Ascending aorta (tissue), 2 donors: ENCODE measurements at regions of chr20 and their contacts with region 1.

Region 1: DNA sequence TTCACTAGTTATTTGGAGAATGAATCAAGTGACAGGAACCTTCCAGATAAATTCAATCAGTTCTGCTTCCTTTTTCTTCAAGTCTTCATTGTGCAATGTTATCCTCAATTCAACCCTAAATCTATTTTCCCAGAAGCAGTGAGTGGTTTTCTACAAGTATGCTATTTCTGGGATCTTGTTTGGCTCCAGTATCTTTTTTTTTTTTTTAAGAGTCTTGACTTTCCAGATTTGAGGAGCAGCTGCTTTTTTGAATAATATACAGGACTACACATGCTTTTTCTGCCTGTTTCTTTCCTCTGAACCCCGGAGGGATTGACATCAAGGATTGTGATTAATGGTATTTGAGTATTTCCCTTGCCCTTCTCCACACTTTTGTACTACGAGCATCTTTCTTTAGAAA is 339.2 kb upstream of the JAG1 start:
- DNase-seq: no peak
- H3K4me3 ChIP-seq: no peak overlapping the region
- H3K27ac ChIP-seq: peak overlapping the region in 1 of 2 donors; percentile 37
- H3K4me1 ChIP-seq: peaks cover 0 to 7% of the 10 kb centered on the region in 2 donors
- H3K27me3 ChIP-seq: no peaks in the 10 kb centered on the region
- CTCF ChIP-seq: no peak

Region 2: DNA sequence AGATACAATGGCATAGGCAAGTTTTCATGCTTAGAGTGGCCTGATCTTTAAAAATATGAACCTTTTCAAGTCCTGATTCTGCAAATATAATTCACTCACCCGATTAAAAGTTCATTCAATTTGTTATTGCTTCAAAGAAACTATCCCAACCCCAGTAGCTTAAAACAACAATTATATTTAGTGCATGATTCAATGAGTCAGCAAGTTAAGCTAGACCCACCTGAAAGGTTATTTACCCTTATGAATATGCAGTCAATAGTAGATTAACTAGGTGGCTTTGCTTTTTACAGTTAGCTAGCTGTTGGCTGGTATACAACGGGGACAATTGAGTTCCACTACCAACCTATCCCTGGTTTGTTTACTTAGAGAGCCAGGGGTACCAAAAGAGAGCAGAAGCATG is 1073.7 kb before region 1 on chr20:
- intact Hi-C with region 1: no loop called
- DNase-seq: no peak
- H3K4me3 ChIP-seq: no peak overlapping the region
- H3K27ac ChIP-seq: no peak overlapping the region
- H3K4me1 ChIP-seq: no peaks in the 10 kb centered on the region
- H3K27me3 ChIP-seq: no peaks in the 10 kb centered on the region
- CTCF ChIP-seq: no peak

Region 3: DNA sequence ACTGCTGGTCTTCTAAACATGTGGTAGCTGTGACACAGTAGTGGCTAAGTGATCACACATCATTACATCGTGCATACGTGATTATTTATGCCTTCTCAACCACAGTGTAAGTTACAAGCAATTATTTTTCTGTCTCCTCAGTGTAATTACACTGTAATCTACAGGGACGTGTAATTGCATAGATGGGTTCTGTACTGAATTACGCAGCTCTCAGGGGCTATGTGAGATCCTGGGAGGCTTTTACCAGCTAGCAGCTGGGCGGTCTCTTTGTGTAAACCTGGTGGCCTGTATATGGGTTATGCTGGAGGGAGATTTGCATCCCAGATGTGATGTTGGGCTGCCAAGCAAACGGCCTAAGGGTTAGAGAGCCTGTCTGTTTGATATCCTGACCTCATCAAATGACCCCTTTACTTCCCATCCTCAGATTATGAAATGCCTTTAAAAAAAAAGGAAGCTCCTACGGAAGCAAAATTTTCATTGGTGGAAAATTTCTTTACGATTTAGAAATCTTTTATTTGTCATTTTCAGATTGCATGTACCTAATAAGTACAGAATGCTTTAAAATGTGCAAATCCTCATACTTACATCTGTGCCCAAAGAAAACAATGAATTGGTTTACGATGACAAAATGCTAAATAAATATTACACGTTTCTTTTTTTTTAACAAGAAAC is 63.6 kb after region 1 on chr20:
- intact Hi-C with region 1: loop called (anchors 10 kb)
- DNase-seq: no peak
- H3K4me3 ChIP-seq: no peak overlapping the region
- H3K27ac ChIP-seq: no peak overlapping the region
- H3K4me1 ChIP-seq: peaks cover 0 to 8% of the 10 kb centered on the region in 2 donors
- H3K27me3 ChIP-seq: no peaks in the 10 kb centered on the region
- CTCF ChIP-seq: no peak

Region 4: GRCh38 chr20:11178946-11179654 is 166.1 kb after region 1 on chr20:
- intact Hi-C with region 1: no loop called
- DNase-seq: no peak
- H3K4me3 ChIP-seq: no peak overlapping the region
- H3K27ac ChIP-seq: peak overlapping the region; percentile 3 to 28
- H3K4me1 ChIP-seq: peaks cover 0 to 13% of the 10 kb centered on the region in 2 donors
- H3K27me3 ChIP-seq: no peaks in the 10 kb centered on the region
- CTCF ChIP-seq: no peak